ENCODE measurements at regions of chr12 and their contacts with region 1.

Region 1: GRCh38 chr12:88844423-88844822 is 264.2 kb upstream of the KITLG start:
- DNase-seq: no peak
- H3K4me3 ChIP-seq: no peak overlapping the region
- H3K27me3 ChIP-seq: no peaks in the 10 kb centered on the region
- CTCF ChIP-seq: no peak

Region 2: DNA sequence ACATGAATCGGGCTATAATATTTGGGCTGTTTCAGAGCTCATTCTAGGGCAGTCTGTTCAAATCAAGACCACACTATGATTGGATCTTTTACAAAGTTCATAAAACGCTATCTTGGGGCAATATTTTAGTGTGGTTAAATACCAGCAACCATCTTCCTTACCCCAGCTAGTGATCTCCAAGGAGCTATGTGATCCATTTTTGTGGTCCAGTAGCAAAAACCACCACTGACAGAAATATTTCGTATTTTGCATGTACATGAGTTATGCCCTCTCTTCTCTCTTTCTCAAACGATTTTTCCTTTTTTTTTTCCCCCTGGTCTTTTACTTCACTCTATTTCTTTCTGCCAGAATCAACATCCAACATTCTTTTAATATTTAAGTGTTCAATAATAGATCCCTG is 16.4 kb after region 1 on chr12:
- CTCF ChIA-PET with region 1: no interaction called
- POLR2A ChIA-PET with region 1: interaction called, 14 read pairs
- DNase-seq: no peak
- H3K4me3 ChIP-seq: no peak overlapping the region
- H3K27me3 ChIP-seq: no peaks in the 10 kb centered on the region
- CTCF ChIP-seq: no peak

Region 3: DNA sequence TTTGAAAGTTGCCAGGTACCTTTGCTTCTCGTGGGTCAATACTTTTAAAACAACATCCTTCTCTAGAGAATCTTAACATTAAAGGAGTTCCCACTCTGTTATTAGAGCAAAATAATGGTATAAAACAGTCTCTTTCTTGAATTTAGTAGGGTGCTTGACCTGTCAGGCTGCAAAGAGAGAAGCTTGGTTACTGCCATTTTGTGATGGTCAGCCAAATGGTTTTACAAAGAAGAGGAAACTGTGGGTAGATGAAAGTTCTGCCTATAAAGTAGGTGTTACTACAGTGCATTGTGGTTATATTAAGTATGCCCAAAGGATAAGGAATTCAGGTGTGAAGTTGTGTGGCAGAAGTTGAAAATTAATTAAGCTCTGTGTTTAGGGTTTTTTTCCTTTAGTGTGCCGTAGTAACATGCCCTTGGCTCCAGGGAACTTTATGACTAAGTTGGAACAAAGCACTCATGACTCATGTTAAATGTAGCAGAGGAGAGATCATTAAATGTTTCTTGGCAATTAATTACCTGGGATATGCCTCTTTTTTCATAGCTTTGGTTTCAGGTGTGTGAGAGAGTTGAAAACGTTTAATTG is 89.8 kb after region 1 on chr12:
- CTCF ChIA-PET with region 1: no interaction called
- POLR2A ChIA-PET with region 1: no interaction called
- DNase-seq: no peak
- H3K4me3 ChIP-seq: no peak overlapping the region
- H3K27me3 ChIP-seq: no peaks in the 10 kb centered on the region
- CTCF ChIP-seq: no peak

Region 4: GRCh38 chr12:88952562-88952942 is 108.1 kb after region 1 on chr12:
- CTCF ChIA-PET with region 1: no interaction called
- POLR2A ChIA-PET with region 1: no interaction called
- DNase-seq: no peak
- H3K4me3 ChIP-seq: no peak overlapping the region
- H3K27me3 ChIP-seq: no peaks in the 10 kb centered on the region
- CTCF ChIP-seq: no peak

Measured in BJ (cell line).